HCT116 (cell line): ENCODE measurements at regions of chr18 and their contacts with region 1.

Region 1: DNA sequence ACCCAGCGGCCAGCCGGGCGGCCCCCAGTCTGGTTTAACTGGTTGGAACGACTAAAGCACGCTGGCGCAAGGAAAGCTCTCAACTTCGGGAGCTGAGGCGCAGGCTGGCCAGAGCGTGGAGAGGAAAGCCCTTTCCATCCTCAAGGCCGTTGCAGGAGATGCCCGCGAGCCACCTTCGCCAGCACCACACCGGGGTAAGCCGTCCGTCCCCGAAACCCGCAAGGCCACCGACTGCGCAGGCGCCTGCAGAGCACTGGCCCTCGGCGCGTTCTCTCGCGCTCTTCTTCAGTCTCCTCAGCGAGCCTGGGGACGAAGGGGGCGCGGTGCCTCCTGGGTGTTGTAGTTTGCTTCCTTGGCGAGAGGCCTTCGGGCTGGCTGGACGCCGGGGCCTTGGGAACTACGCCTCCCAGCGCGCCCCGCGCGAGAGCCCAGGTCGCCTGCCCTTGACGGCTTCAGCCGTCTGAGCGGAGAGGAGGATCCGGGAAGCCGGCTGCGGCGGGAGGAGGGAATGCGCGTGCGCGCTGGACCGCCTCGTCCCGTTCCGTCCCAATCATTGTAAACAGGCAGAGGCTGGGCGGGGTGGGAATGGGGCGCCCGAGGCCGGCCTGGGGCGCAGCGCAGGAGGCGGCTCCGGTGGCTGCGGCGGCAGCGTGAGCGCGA is at the start of gene RALBP1:
- DNase-seq: peak; percentile 98
- ATAC-seq: peak; percentile 91
- H3K4me3 ChIP-seq: peak within 1 kb of the TSS; percentile 89 to 90
- H3K27ac ChIP-seq: peak within 1 kb of the TSS; percentile 83
- H3K4me1 ChIP-seq: peaks cover 7 to 23% of the 10 kb centered on the region in 2 experiments
- H3K27me3 ChIP-seq: no peaks in the 10 kb centered on the region
- CTCF ChIP-seq: no peak
- POLR2A ChIP-seq: peak; percentile 73
- RAD21 ChIP-seq: no peak
- total RNA-seq, gene RALBP1: 66.2 TPM

Region 2: DNA sequence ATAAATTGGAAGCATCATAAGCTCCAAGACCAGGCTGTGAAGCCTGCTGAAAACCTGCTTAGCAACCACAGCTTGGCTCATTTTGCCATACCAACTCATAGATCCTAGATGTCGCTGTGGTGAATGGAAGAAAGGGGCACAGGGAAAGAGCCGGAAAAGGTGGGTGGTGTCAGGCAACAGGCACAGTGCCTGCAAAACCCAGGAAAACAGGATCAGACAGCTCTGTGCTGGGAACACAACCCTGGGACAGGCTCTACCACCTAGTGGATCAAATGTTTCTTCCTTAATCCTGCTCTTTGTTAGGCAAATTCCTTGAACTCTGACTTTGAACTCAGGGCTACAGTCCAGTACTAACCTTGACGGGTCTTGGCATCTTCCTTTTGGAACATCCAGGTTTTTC is 108.9 kb before region 1 on chr18:
- CTCF ChIA-PET with region 1: no interaction called
- POLR2A ChIA-PET with region 1: no interaction called
- RAD21 ChIA-PET with region 1: no interaction called
- intact Hi-C with region 1: loop called (anchors 5 kb)
- DNase-seq: peak; percentile 64
- ATAC-seq: peak; percentile 80
- H3K4me3 ChIP-seq: no peak overlapping the region
- H3K27ac ChIP-seq: peak overlapping the region; percentile 6; the same call in 1 of the 2 replicates
- H3K4me1 ChIP-seq: peaks cover 33 to 53% of the 10 kb centered on the region in 2 experiments
- H3K27me3 ChIP-seq: no peaks in the 10 kb centered on the region
- CTCF ChIP-seq: peak; percentile 44 to 55 (median 52); a peak in 5 of 6 replicates
- POLR2A ChIP-seq: no peak
- RAD21 ChIP-seq: peak; percentile 63

Region 3: GRCh38 chr18:9488538-9488937 is 13.4 kb after region 1 on chr18:
- CTCF ChIA-PET with region 1: no interaction called
- POLR2A ChIA-PET with region 1: no interaction called
- RAD21 ChIA-PET with region 1: no interaction called
- intact Hi-C with region 1: no loop called
- DNase-seq: no peak
- ATAC-seq: no peak
- H3K4me3 ChIP-seq: no peak overlapping the region
- H3K27ac ChIP-seq: no peak overlapping the region
- H3K4me1 ChIP-seq: no peaks in the 10 kb centered on the region
- H3K27me3 ChIP-seq: no peaks in the 10 kb centered on the region
- CTCF ChIP-seq: no peak
- POLR2A ChIP-seq: no peak
- RAD21 ChIP-seq: no peak

Region 4: GRCh38 chr18:9535382-9535991 is 60.4 kb after region 1 on chr18:
- CTCF ChIA-PET with region 1: no interaction called
- POLR2A ChIA-PET with region 1: no interaction called
- RAD21 ChIA-PET with region 1: no interaction called
- intact Hi-C with region 1: loop called (anchors 10 kb)
- DNase-seq: no peak
- ATAC-seq: no peak
- H3K4me3 ChIP-seq: no peak overlapping the region
- H3K27ac ChIP-seq: no peak overlapping the region
- H3K4me1 ChIP-seq: no peaks in the 10 kb centered on the region
- H3K27me3 ChIP-seq: no peaks in the 10 kb centered on the region
- CTCF ChIP-seq: no peak
- POLR2A ChIP-seq: no peak
- RAD21 ChIP-seq: no peak

Region 5: GRCh38 chr18:9683407-9684396 is 208.6 kb after region 1 on chr18:
- CTCF ChIA-PET with region 1: no interaction called
- POLR2A ChIA-PET with region 1: no interaction called
- RAD21 ChIA-PET with region 1: no interaction called
- intact Hi-C with region 1: no loop called
- DNase-seq: peak; percentile 50
- ATAC-seq: peak; percentile 89
- H3K4me3 ChIP-seq: no peak overlapping the region
- H3K27ac ChIP-seq: no peak overlapping the region
- H3K4me1 ChIP-seq: peaks cover 12 to 17% of the 10 kb centered on the region in 2 experiments
- H3K27me3 ChIP-seq: no peaks in the 10 kb centered on the region
- CTCF ChIP-seq: peak; percentile 49 to 67 (median 61); a peak in 5 of 6 replicates
- POLR2A ChIP-seq: no peak
- RAD21 ChIP-seq: peak; percentile 86